ENCODE measurements at regions of chr15 and their contacts with region 1.

Region 1: GRCh38 chr15:39301589-39301999 is 279.3 kb upstream of the THBS1 start:
- DNase-seq: no peak
- H3K4me3 ChIP-seq: no peak overlapping the region
- H3K27ac ChIP-seq: no peak overlapping the region
- H3K4me1 ChIP-seq: peaks cover 20% of the 10 kb centered on the region
- H3K27me3 ChIP-seq: no peaks in the 10 kb centered on the region
- CTCF ChIP-seq: no peak

Region 2: DNA sequence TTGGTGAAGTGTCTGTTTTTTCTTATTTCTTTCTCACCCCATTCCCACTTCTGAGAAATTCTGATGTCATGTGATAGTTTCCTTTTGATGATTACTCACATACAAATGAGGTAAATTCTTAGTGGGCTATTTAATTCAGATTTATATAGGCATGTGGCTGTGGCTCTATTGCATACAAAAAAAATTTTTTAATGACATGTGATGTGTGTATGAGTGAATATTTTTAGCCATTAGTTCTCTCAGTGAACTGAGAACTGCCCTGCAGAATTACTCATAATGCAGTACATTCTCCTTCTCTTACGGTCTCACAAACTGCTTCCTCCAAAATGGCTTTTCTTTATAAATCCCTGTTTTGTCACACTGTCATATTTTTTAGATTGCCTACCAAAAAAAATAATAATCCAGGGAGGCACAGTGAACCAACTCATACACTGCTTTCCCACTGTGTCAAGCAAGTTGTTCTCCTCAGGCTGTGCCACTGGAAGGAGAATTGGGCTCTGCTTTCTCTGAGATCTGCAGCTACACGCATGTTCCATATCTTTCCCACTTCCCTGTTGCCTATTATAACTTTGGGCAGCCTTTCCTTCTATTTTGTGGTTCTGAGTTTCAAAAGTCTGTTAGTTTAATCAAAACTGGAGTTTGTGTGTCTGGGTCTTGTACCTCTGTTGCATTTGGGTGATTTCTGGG is 136.4 kb before region 1 on chr15:
- CTCF ChIA-PET with region 1: no interaction called
- POLR2A ChIA-PET with region 1: no interaction called
- intact Hi-C with region 1: no loop called
- DNase-seq: no peak
- H3K4me3 ChIP-seq: no peak overlapping the region
- H3K27ac ChIP-seq: no peak overlapping the region
- H3K4me1 ChIP-seq: no peaks in the 10 kb centered on the region
- H3K27me3 ChIP-seq: no peaks in the 10 kb centered on the region
- CTCF ChIP-seq: no peak

Region 3: GRCh38 chr15:39232512-39232911 is 69.1 kb before region 1 on chr15:
- CTCF ChIA-PET with region 1: no interaction called
- POLR2A ChIA-PET with region 1: interaction called, 10 read pairs
- intact Hi-C with region 1: loop called (anchors 10 kb)
- DNase-seq: peak in 1 of 2 experiments; percentile 44
- H3K4me3 ChIP-seq: no peak overlapping the region
- H3K27ac ChIP-seq: no peak overlapping the region
- H3K4me1 ChIP-seq: peaks cover 27% of the 10 kb centered on the region
- H3K27me3 ChIP-seq: no peaks in the 10 kb centered on the region
- CTCF ChIP-seq: no peak

Region 4: GRCh38 chr15:39376371-39376909 is 74.8 kb after region 1 on chr15:
- CTCF ChIA-PET with region 1: no interaction called
- POLR2A ChIA-PET with region 1: no interaction called
- intact Hi-C with region 1: no loop called
- DNase-seq: peak in 1 of 2 experiments; percentile 55
- H3K4me3 ChIP-seq: no peak overlapping the region
- H3K27ac ChIP-seq: no peak overlapping the region
- H3K4me1 ChIP-seq: no peaks in the 10 kb centered on the region
- H3K27me3 ChIP-seq: no peaks in the 10 kb centered on the region
- CTCF ChIP-seq: no peak

Region 5: GRCh38 chr15:39391230-39391629 is 89.6 kb after region 1 on chr15:
- CTCF ChIA-PET with region 1: no interaction called
- POLR2A ChIA-PET with region 1: no interaction called
- intact Hi-C with region 1: loop called (anchors 5 kb)
- DNase-seq: peak; percentile 62 to 77
- H3K4me3 ChIP-seq: no peak overlapping the region
- H3K27ac ChIP-seq: no peak overlapping the region
- H3K4me1 ChIP-seq: peaks cover 36% of the 10 kb centered on the region
- H3K27me3 ChIP-seq: no peaks in the 10 kb centered on the region
- CTCF ChIP-seq: no peak